WTC11 (cell line): ENCODE measurements at regions of chr17 and their contacts with region 1.

Region 1: DNA sequence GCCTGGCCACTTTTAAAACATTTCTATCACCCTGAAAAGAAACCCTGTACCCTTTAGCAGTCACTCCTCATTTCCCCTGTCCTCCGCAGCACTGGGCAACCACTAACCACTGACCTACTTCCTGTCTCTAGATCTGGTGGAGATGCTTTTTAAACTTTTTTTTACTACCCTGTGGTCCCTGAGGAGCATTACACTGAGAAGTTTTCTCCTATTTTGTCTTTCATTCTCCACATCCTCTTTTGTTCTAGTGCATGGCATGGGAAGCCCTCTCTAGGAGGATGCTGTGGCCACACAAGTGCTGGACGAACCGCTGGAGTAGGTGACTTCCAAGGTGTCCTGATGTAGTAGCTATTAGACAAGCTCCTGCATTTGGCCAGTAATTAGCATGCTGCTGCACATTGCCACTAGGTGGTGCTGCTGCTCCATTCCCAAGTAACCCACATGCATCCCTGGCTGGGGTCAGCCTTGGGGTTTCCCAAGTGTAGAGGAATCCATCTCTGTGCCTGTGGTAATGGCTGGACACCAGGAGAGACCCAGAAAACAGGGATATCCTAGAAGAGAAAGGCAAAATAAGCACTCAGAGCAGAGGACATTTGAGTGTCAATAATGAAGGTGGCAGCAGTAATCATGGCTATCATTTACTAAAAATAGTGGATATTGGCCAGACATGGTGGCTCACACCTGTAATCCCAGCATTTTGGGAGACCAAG is 143.8 kb upstream of the CRHR1 start:
- DNase-seq: peak; percentile 91
- ATAC-seq: peak; percentile 93
- H3K4me3 Mint-ChIP-seq: no peak overlapping the region
- H3K27ac Mint-ChIP-seq: no peak overlapping the region
- H3K4me1 Mint-ChIP-seq: no peaks in the 10 kb centered on the region
- H3K27me3 Mint-ChIP-seq: no peaks in the 10 kb centered on the region
- CTCF ChIP-seq: peak; percentile 93

Region 2: DNA sequence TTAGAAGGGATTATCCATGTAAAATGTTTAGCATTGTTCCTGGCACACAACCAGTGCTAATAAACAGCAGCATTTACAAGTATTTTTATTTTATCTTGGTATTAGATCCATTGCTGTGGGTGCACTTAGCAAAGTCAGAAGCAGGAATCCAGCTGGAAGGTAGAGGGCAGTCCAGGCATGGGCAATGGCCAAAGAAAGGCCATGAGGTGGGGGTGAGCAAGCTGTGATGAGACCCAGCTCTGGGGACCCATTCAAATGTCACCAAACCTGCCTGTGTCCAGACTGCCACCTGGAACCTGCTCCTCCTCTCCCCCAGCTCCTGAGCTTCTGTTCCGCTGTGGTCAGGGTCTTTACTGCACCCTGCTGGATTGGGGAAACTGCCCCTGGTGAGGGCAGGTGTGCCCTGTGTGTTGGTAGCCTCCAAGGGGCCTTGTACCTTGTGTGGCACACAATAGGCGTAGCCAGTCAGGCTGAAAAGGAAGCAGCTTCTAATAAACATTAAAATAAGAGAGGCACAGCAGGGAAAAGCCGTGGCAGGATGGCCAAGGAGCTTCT is 25.8 kb after region 1 on chr17:
- CTCF ChIA-PET with region 1: interaction called, 26 read pairs
- POLR2A ChIA-PET with region 1: no interaction called
- DNase-seq: peak; percentile 26
- ATAC-seq: peak; percentile 50
- H3K4me3 Mint-ChIP-seq: no peak overlapping the region
- H3K27ac Mint-ChIP-seq: no peak overlapping the region
- H3K4me1 Mint-ChIP-seq: no peaks in the 10 kb centered on the region
- H3K27me3 Mint-ChIP-seq: no peaks in the 10 kb centered on the region; the same call in 1 of the 2 replicates
- CTCF ChIP-seq: no peak

Region 3: GRCh38 chr17:45729294-45729907 is 89.1 kb after region 1 on chr17:
- CTCF ChIA-PET with region 1: no interaction called
- POLR2A ChIA-PET with region 1: no interaction called
- DNase-seq: no peak
- ATAC-seq: no peak
- H3K4me3 Mint-ChIP-seq: no peak overlapping the region
- H3K27ac Mint-ChIP-seq: no peak overlapping the region
- H3K4me1 Mint-ChIP-seq: no peaks in the 10 kb centered on the region
- H3K27me3 Mint-ChIP-seq: peaks cover 75% of the 10 kb centered on the region
- CTCF ChIP-seq: no peak

Region 4: GRCh38 chr17:45768000-45768399 is 127.7 kb after region 1 on chr17:
- CTCF ChIA-PET with region 1: interaction called, 17 read pairs
- POLR2A ChIA-PET with region 1: no interaction called
- DNase-seq: peak; percentile 51
- ATAC-seq: peak; percentile 80
- H3K4me3 Mint-ChIP-seq: no peak overlapping the region
- H3K27ac Mint-ChIP-seq: no peak overlapping the region
- H3K4me1 Mint-ChIP-seq: peaks cover 27% of the 10 kb centered on the region
- H3K27me3 Mint-ChIP-seq: no peaks in the 10 kb centered on the region
- CTCF ChIP-seq: no peak

Region 5: DNA sequence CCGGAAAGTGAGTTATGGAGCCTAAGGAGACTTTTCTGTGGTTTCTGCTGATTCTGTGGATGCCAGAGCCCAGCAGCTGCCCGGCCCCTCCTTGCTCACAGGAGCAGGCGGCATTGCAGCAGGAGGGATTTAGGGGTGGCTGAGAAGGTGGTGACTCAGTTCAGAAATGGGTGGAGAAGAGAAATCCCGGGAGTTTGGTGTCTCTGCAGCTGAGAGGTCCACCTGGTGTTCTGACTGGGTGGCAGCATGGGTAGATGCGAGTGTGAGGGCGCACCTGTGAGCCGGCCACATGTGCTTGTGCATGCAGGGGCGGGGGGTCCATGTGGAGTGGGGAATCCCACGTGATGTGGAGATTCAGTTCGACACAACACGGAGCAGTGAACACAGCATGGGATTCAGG is 188.3 kb after region 1 on chr17:
- CTCF ChIA-PET with region 1: interaction called, 45 read pairs
- POLR2A ChIA-PET with region 1: interaction called, 3 read pairs
- DNase-seq: no peak
- ATAC-seq: no peak
- H3K4me3 Mint-ChIP-seq: no peak overlapping the region
- H3K27ac Mint-ChIP-seq: no peak overlapping the region
- H3K4me1 Mint-ChIP-seq: no peaks in the 10 kb centered on the region
- H3K27me3 Mint-ChIP-seq: no peaks in the 10 kb centered on the region
- CTCF ChIP-seq: no peak

Region 6: GRCh38 chr17:45852535-45853297 is 212.4 kb after region 1 on chr17:
- CTCF ChIA-PET with region 1: interaction called, 17 read pairs
- POLR2A ChIA-PET with region 1: no interaction called
- DNase-seq: peak; percentile 76
- ATAC-seq: peak; percentile 65
- H3K4me3 Mint-ChIP-seq: no peak overlapping the region
- H3K27ac Mint-ChIP-seq: no peak overlapping the region
- H3K4me1 Mint-ChIP-seq: no peaks in the 10 kb centered on the region
- H3K27me3 Mint-ChIP-seq: peaks cover 5% of the 10 kb centered on the region
- CTCF ChIP-seq: peak; percentile 89